HEK293 (cell line): ENCODE measurements at regions of chr21 and their contacts with region 1.

Region 1: GRCh38 chr21:33127154-33127893 is 57.4 kb downstream of the OLIG1 start:
- H3K4me3 ChIP-seq: peak overlapping the region; percentile 11
- H3K27ac ChIP-seq: no peak overlapping the region
- H3K4me1 ChIP-seq: no peaks in the 10 kb centered on the region
- CTCF ChIP-seq: peak; percentile 84

Region 2: GRCh38 chr21:32826329-32827167 is 300.8 kb before region 1 on chr21:
- CTCF ChIA-PET with region 1: interaction called, 24 read pairs
- POLR2A ChIA-PET with region 1: no interaction called
- H3K4me3 ChIP-seq: no peak overlapping the region
- H3K27ac ChIP-seq: no peak overlapping the region
- H3K4me1 ChIP-seq: no peaks in the 10 kb centered on the region
- CTCF ChIP-seq: peak; percentile 80

Region 3: DNA sequence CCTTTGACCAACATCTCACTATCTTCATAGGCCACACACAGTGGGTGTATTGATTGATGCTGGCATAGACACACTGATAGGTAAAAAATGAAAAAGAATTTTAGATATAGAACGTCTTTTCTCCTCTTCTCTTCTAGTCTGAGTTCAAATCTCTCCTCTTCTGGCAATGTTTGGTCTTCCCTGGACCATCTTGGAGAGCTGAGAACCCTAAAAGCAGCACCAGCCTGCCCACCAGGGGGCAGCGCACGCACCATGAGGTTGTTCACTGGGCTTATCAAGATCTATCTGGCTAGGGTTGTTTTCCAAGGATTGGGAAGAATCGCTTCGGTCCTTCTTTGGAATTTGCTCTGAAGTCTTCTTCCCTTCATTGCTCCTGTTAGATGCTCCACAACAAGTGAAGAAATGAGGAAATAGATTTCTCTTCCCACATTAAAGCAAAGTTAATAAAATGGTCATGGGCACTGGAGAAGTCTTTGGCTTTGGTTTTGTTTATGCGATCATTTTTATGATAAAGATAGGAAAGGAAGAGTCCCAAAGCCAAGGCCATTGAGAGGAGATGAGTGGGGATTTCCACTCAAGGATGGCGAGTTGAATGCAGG is 205.6 kb before region 1 on chr21:
- CTCF ChIA-PET with region 1: interaction called, 21 read pairs
- POLR2A ChIA-PET with region 1: no interaction called
- H3K4me3 ChIP-seq: no peak overlapping the region
- H3K27ac ChIP-seq: no peak overlapping the region
- H3K4me1 ChIP-seq: no peaks in the 10 kb centered on the region
- CTCF ChIP-seq: no peak

Region 4: DNA sequence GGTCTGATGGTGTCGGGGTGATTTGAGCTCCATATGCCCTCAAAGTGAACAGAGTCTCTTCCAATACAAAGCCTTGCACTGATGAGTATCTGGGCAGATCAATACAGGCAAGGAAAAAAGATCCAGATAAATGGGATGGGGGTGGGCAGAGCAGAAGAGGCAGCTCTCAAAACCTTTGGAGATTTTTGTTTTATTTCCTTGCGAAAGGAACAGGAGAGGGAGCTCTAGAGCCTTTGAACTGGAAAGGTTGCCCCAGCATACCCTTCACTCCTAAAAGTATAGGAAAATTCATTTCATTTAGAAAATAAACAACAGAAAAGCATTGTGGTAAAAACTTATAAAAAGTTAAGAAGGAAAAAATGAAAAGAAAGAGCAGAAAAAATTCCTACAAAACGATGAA is 133.0 kb before region 1 on chr21:
- CTCF ChIA-PET with region 1: interaction called, 127 read pairs
- POLR2A ChIA-PET with region 1: no interaction called
- H3K4me3 ChIP-seq: no peak overlapping the region
- H3K27ac ChIP-seq: no peak overlapping the region
- H3K4me1 ChIP-seq: no peaks in the 10 kb centered on the region
- CTCF ChIP-seq: no peak

Region 5: DNA sequence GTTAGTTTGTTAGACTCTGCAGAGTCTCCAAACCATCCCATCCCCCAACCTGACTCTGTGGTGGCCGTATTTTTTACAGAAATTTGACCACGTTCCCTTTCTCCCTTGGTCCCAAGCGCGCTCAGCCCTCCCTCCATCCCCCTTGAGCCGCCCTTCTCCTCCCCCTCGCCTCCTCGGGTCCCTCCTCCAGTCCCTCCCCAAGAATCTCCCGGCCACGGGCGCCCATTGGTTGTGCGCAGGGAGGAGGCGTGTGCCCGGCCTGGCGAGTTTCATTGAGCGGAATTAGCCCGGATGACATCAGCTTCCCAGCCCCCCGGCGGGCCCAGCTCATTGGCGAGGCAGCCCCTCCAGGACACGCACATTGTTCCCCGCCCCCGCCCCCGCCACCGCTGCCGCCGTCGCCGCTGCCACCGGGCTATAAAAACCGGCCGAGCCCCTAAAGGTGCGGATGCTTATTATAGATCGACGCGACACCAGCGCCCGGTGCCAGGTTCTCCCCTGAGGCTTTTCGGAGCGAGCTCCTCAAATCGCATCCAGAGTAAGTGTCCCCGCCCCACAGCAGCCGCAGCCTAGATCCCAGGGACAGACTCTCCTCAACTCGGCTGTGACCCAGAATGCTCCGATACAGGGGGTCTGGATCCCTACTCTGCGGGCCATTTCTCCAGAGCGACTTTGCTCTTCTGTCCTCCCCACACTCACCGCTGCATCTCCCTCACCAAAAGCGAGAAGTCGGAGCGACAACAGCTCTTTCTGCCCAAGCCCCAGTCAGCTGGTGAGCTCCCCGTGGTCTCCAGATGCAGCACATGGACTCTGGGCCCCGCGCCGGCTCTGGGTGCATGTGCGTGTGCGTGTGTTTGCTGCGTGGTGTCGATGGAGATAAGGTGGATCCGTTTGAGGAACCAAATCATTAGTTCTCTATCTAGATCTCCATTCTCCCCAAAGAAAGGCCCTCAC is 101.6 kb before region 1 on chr21 and contains the start of gene OLIG2:
- CTCF ChIA-PET with region 1: interaction called, 11 read pairs
- POLR2A ChIA-PET with region 1: interaction called, 3 read pairs
- H3K4me3 ChIP-seq: peak within 1 kb of the TSS; percentile 48
- H3K27ac ChIP-seq: no peak within 1 kb of the TSS; the same call in 1 of the 2 replicates
- H3K4me1 ChIP-seq: no peaks in the 10 kb centered on the region
- CTCF ChIP-seq: no peak

Region 6: GRCh38 chr21:33325222-33326067 is 198.1 kb after region 1 on chr21:
- CTCF ChIA-PET with region 1: no interaction called
- POLR2A ChIA-PET with region 1: no interaction called
- H3K4me3 ChIP-seq: peak overlapping the region; percentile 88
- H3K27ac ChIP-seq: peak overlapping the region; percentile 85
- H3K4me1 ChIP-seq: no peaks in the 10 kb centered on the region
- CTCF ChIP-seq: no peak

Region 7: DNA sequence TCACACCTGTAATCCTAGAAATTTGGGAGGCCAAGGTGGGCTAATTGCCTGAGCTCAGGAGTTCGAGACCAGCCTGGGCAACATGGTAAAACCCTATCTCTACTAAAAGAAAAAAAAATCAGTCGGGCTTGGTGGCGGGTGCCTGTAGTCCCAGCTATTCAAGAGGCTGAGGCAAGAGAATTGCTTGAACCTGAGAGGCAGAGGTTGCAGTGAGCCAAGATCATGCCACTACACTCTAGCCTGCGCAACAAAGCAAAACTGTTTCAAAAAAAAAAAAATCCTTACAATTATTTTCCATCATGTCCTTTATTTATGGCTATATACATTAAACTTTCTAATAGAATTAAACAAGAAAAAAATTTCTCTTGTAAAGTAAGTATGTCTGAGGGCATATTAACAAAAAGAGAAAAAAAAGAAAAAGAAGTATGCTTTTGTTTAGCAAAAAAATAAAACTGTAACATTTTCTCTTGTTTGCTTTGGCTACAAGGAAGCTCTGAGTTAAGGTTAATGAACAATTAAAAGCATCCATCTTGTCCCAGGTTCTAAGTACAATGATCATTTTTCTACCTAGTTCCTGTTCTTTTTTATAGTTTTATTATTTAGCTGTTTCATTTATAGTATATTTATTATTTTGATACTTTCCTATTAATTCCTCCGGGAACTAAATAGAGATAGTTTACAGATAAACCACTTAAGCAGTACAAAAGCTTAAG is 334.4 kb after region 1 on chr21:
- CTCF ChIA-PET with region 1: no interaction called
- POLR2A ChIA-PET with region 1: no interaction called
- H3K4me3 ChIP-seq: no peak overlapping the region
- H3K27ac ChIP-seq: no peak overlapping the region
- H3K4me1 ChIP-seq: no peaks in the 10 kb centered on the region
- CTCF ChIP-seq: no peak